ENCODE measurements at regions of chr4 and their contacts with region 1.

Region 1: DNA sequence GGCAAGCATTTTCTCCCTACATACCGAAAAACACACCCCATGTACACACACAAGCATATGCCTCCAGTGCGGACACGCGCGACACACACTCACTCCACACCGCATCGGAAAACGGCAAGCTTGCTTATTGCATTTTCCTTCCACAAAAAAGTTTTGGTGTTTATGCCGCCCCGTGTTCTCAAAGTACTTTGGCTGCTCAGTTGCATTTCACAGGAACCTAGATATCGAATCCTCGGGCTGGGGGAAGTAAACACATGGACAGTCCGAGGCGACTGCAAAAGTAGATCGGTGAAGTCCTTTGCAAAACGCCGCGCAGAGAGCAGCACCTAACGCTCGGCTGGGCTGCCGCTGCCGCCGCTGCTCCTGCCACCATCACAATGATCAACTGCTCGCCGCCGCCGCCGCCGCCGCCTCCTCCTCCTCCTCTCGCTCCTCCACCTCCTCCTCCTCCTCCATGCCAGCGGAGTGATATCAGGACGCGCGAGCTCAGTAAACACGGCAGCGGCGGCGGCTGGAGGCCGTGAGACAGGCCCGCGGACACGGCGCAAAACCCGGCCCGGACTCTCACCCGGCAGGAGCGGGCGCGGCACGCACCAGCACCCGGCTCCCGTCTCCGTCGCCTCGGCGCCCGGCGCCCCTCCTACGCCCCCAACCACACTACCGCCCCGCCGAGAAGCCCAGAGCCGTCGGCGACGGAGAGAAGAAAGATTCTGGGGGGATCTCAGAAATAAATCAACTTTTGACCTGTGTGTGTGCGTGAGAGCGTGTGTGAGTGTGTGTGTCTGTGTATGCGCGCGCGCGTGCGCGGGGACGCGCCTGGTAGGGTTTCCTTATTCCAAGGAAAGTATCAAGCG is at the start of gene MAML3:
- DNase-seq: peak; percentile 90
- ATAC-seq: peak; percentile 40
- H3K4me3 Mint-ChIP-seq: peak within 1 kb of the TSS; percentile 86
- H3K27ac Mint-ChIP-seq: peak within 1 kb of the TSS; percentile 80
- H3K4me1 Mint-ChIP-seq: peaks cover 37% of the 10 kb centered on the region
- H3K27me3 Mint-ChIP-seq: peaks cover 13% of the 10 kb centered on the region
- total RNA-seq, gene MAML3: 1.6 to 1.9 TPM

Region 2: GRCh38 chr4:139177868-139178611 is 975.9 kb before region 1 on chr4:
- CTCF ChIA-PET with region 1: no interaction called
- POLR2A ChIA-PET with region 1: no interaction called
- intact Hi-C with region 1: loop called in 1 of 2 experiments (anchors 2 kb)
- DNase-seq: peak; percentile 95
- ATAC-seq: peak; percentile 77
- H3K4me3 Mint-ChIP-seq: peak overlapping the region; percentile 81
- H3K27ac Mint-ChIP-seq: peak overlapping the region; percentile 72
- H3K4me1 Mint-ChIP-seq: peaks cover 12% of the 10 kb centered on the region
- H3K27me3 Mint-ChIP-seq: peaks cover 12% of the 10 kb centered on the region

Region 3: DNA sequence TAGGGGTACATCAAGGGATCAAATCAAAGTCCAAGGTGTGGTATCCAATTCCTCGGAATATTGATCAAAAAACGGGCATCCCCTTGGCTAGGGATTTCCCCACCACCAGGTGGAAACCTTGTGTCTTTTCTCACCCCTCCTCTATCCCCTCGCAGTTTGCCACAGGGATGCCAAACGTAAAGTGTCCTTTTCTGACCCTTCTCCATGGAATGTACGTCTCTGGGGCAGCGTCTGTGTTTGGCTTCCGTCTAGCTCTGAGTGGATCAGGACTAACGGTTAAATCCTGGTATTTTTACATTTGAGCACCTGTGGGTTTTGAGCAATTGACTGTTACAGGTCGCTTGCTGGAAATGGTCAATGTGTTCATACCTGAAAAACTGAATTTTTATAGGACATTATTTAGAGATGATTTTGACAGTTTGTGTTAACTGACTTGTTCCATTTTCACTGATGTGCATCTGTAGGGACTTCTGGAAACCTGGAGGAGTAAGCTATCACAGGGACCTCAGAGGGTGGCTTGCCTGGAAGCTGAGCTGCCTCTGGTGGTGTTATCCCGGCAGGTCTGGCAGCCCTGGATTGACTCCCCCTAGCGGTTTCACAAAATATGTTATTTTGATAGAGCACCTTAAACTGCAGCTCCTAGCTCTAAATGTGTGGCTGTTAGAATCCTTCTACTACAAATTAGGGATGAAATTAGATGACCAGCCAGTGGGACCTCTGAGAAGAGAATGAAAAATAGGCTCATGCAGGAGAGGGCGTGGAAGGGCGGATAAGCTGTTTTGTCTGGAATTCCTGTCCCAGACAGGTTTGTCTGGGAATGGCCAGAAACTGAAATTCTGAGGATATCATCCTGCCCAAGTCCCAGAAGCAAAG is 497.1 kb before region 1 on chr4:
- CTCF ChIA-PET with region 1: no interaction called
- POLR2A ChIA-PET with region 1: interaction called, 4 read pairs
- intact Hi-C with region 1: loop called (anchors 2 to 10 kb)
- DNase-seq: peak; percentile 73
- ATAC-seq: peak; percentile 48
- H3K4me3 Mint-ChIP-seq: peak overlapping the region; percentile 57
- H3K27ac Mint-ChIP-seq: peak overlapping the region; percentile 99
- H3K4me1 Mint-ChIP-seq: peaks cover 24% of the 10 kb centered on the region
- H3K27me3 Mint-ChIP-seq: no peaks in the 10 kb centered on the region

Region 4: DNA sequence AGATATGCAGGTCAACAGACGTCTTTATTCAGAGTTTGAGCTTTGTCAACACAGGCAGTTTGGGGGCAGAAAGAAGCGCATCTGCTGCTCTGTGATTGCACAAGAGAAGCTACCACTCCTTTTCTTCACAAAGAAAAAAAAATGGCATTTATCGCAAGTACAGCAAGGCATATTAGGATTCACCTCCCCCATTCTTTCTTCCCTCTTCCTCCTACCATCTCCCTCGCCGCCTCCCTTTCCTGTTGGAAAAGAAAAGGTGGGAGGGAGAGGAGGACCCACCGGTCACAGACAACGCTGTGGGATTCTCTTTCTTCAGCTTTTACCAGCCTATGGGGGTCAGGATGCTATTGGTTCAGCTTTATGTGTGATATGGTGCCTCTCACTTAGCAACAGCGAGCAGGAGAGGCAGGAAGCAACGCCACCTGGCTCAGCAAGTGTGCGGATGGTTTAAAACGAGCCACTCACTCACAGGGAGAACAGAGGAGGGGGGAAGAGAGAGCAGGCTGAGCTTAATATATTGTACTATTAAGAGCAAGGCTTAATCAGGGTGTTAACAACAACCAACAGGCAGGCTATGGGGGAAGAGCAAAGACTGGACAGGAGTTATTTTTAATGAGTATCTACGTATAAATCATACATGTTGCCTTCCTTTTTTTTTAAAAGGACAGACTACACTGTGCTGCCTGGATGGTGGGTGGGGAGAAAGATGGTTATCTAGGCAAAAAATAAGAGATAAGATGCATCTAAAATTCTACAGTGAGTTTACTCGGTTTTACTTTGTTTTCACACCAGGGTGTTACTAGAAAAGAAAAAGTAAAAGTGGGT is 104.7 kb before region 1 on chr4:
- CTCF ChIA-PET with region 1: interaction called, 7 read pairs
- POLR2A ChIA-PET with region 1: interaction called, 4 read pairs
- intact Hi-C with region 1: loop called (anchors 2 kb)
- DNase-seq: peak; percentile 71
- ATAC-seq: peak; percentile 91
- H3K4me3 Mint-ChIP-seq: peak overlapping the region; percentile 73
- H3K27ac Mint-ChIP-seq: peak overlapping the region; percentile 87
- H3K4me1 Mint-ChIP-seq: peaks cover 45% of the 10 kb centered on the region
- H3K27me3 Mint-ChIP-seq: peaks cover 8% of the 10 kb centered on the region

Region 5: DNA sequence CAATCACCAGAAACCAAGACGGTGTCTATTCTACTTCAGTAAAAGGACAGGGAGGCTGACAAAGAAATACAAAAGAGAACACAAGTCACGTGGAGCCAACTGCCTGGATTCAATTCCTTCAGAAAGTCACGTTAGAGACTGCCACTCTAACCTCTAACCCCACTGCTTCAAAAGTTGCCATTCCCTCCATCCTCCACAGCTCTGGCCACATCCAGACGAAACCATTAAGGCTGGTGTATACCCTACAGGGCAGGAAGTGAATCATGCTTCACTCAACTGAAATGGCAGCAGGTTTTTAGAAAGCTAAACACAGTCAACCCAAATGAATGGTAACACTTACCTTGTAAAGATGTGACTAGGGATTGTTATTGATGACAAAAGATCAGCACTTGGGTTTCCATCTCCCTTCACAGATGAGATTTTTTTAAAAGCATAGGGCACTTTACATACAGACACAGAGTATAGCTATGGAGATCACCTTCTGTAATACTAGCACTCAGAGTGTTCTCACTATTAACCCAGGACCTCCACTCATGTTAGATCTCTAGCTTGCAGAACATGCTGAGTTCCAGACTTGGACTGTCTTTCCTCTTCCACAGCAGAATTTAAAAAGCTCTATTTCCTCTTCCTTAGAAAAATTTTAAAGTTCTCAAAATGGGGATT is 37.4 kb before region 1 on chr4:
- CTCF ChIA-PET with region 1: interaction called, 3 read pairs
- POLR2A ChIA-PET with region 1: interaction called, 3 read pairs
- intact Hi-C with region 1: loop called (anchors 1 to 5 kb)
- DNase-seq: peak; percentile 58
- ATAC-seq: peak; percentile 99
- H3K4me3 Mint-ChIP-seq: no peak overlapping the region
- H3K27ac Mint-ChIP-seq: peak overlapping the region; percentile 72
- H3K4me1 Mint-ChIP-seq: peaks cover 25% of the 10 kb centered on the region
- H3K27me3 Mint-ChIP-seq: no peaks in the 10 kb centered on the region

Region 6: GRCh38 chr4:140523857-140524742 is 370.2 kb after region 1 on chr4 and contains the start of gene ELMOD2:
- CTCF ChIA-PET with region 1: no interaction called
- POLR2A ChIA-PET with region 1: no interaction called
- intact Hi-C with region 1: loop called in 1 of 2 experiments (anchors 2 kb)
- DNase-seq: peak; percentile 99
- ATAC-seq: peak; percentile 100
- H3K4me3 Mint-ChIP-seq: peak within 1 kb of the TSS; percentile 82
- H3K27ac Mint-ChIP-seq: peak within 1 kb of the TSS; percentile 32
- H3K4me1 Mint-ChIP-seq: peaks cover 19% of the 10 kb centered on the region
- H3K27me3 Mint-ChIP-seq: no peaks in the 10 kb centered on the region
- total RNA-seq, gene ELMOD2: 13.2 to 14.3 TPM

Measured in activated CD4-positive, alpha-beta T cell treated with anti-CD3 and anti-CD28 coated beads for 36 hours (primary cell).